H1 (cell line): ENCODE measurements at regions of chr16 and their contacts with region 1.

Region 1: GRCh38 chr16:74984535-74985296 is at the start of gene WDR59:
- DNase-seq: peak; percentile 97 to 98
- H3K4me3 ChIP-seq: peak within 1 kb of the TSS; percentile 76 to 91 (median 87)
- H3K27ac ChIP-seq: peak within 1 kb of the TSS; percentile 86
- H3K4me1 ChIP-seq: no peaks in the 10 kb centered on the region
- H3K27me3 ChIP-seq: no peaks in the 10 kb centered on the region
- CTCF ChIP-seq: no peak
- EP300 ChIP-seq: no peak
- POLR2A ChIP-seq: peak; percentile 82 to 84
- RAD21 ChIP-seq: no peak
- total RNA-seq, gene WDR59: 107 and 124 TPM in 2 replicates

Region 2: GRCh38 chr16:74931445-74931844 is 53.3 kb before region 1 on chr16:
- CTCF ChIA-PET with region 1: no interaction called
- POLR2A ChIA-PET with region 1: no interaction called
- DNase-seq: no peak
- H3K4me3 ChIP-seq: no peak overlapping the region
- H3K27ac ChIP-seq: no peak overlapping the region
- H3K4me1 ChIP-seq: no peaks in the 10 kb centered on the region
- H3K27me3 ChIP-seq: no peaks in the 10 kb centered on the region
- CTCF ChIP-seq: no peak
- EP300 ChIP-seq: no peak
- POLR2A ChIP-seq: no peak
- RAD21 ChIP-seq: no peak

Region 3: GRCh38 chr16:74973153-74973703 is 11.5 kb before region 1 on chr16:
- CTCF ChIA-PET with region 1: interaction called, 5 read pairs
- POLR2A ChIA-PET with region 1: interaction called, 11 read pairs
- DNase-seq: no peak
- H3K4me3 ChIP-seq: no peak overlapping the region
- H3K27ac ChIP-seq: no peak overlapping the region
- H3K4me1 ChIP-seq: no peaks in the 10 kb centered on the region; a peak in 2 of 7 replicates
- H3K27me3 ChIP-seq: no peaks in the 10 kb centered on the region; a peak in 1 of 7 replicates
- CTCF ChIP-seq: no peak
- EP300 ChIP-seq: no peak
- POLR2A ChIP-seq: no peak
- RAD21 ChIP-seq: no peak

Region 4: DNA sequence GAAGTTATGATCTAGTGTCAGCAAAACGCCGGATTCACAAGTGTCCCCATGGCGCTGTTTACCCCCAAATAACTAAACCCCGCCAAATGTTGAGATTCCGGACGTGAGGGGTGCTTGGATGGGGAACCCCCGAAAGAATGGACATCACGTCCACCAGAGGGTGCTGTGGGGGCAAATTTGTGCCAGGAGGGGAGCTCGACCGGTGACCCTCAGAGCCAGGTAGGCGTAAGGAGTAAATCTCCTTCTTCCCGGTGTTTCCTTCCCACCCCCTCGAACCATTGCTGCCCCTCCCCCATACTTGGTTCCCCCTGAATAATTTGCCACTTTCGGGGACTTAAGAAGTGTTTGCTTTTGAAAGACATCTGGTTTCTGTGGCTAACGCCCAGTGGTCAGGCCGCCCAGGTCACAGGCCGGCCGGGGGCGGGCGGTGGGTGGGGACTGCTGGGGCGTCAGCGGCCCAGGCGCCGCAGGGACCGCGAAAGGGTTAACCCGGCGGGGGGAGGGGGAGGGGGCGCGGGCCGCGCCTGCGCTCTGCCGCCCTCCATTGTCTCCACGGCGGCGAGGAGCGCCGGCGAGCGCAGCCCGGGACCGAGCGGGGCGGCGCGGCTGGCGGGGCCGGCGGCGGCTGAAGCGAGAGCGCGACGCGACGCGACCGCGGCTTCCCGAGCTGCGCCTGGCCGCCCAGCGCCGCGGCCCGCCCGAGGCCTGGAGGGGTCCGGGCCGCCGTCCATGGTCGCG is 13.9 kb after region 1 on chr16 and contains the start of gene ZNRF1:
- CTCF ChIA-PET with region 1: interaction called, 20 read pairs
- POLR2A ChIA-PET with region 1: interaction called, 9 read pairs
- DNase-seq: peak; percentile 60 to 94
- H3K4me3 ChIP-seq: peak within 1 kb of the TSS; percentile 56 to 90 (median 70)
- H3K27ac ChIP-seq: peak within 1 kb of the TSS; percentile 67; the same call in 1 of the 2 replicates
- H3K4me1 ChIP-seq: peaks cover 2 to 15% (median 12%) of the 10 kb centered on the region in 4 experiments; a peak in 6 of 7 replicates
- H3K27me3 ChIP-seq: no peaks in the 10 kb centered on the region; a peak in 1 of 7 replicates
- CTCF ChIP-seq: peak; percentile 74 to 87 (median 80)
- EP300 ChIP-seq: no peak
- POLR2A ChIP-seq: peak; percentile 54 to 74
- RAD21 ChIP-seq: peak; percentile 83
- total RNA-seq, gene ZNRF1: 48.0 and 52.9 TPM in 2 replicates